T-cell (primary cell): ENCODE measurements at regions of chr19 and their contacts with region 1.

Region 1: GRCh38 chr19:51359294-51359693 is 6.9 kb downstream of the ETFB start:
- DNase-seq: no peak
- ATAC-seq: no peak
- H3K4me3 ChIP-seq: no peak overlapping the region
- H3K4me3 Mint-ChIP-seq: no peak overlapping the region
- H3K27ac ChIP-seq: no peak overlapping the region
- H3K27ac Mint-ChIP-seq: no peak overlapping the region
- H3K4me1 ChIP-seq: peaks cover 10 to 26% of the 10 kb centered on the region in 2 experiments
- H3K4me1 Mint-ChIP-seq: peaks cover 43 to 47% (median 45%) of the 10 kb centered on the region in 3 donors
- H3K27me3 ChIP-seq: no peaks in the 10 kb centered on the region
- H3K27me3 Mint-ChIP-seq: no peaks in the 10 kb centered on the region

Region 2: DNA sequence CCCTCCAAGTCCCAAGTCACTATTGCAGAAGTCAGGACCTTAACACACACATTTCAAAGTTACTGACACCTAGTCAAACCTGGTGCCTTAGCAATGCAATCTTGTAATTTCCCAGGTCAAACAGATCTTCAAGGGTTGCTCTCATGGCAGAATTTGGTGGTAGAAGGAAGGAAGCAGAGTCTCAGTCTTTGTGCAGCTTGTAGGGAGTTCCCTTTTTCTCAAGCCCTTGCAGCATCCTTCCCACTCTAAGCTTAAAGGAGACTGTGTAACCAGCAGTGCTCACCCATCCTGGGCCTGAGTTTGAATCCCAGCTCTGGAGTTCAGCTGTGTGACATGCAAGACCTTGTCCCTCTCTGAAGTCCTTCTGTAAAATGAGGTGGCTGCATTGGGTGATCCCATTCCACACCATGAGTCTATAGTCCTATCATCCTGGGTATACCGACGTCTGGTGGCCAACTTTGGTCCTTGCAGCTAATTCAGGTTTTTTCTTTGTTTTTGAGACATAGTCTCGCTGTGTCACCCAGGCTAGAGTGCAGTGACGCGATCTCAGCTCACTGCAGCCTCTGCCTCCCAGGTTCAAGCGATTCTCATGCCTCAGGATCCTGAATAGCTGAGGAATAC is 48.3 kb after region 1 on chr19:
- CTCF ChIA-PET with region 1: no interaction called
- POLR2A ChIA-PET with region 1: interaction called in 1 of 2 experiments, 10 read pairs
- DNase-seq: peak in 14 of 35 experiments; percentile 8 to 59 (median 20)
- ATAC-seq: peak; percentile 37 to 51 (median 50)
- H3K4me3 ChIP-seq: no peak overlapping the region
- H3K4me3 Mint-ChIP-seq: no peak overlapping the region
- H3K27ac ChIP-seq: no peak overlapping the region
- H3K27ac Mint-ChIP-seq: no peak overlapping the region
- H3K4me1 ChIP-seq: no peaks in the 10 kb centered on the region
- H3K4me1 Mint-ChIP-seq: peaks cover 0 to 4% (median 0%) of the 10 kb centered on the region in 3 donors
- H3K27me3 ChIP-seq: peaks cover 0 to 3% of the 10 kb centered on the region in 2 experiments
- H3K27me3 Mint-ChIP-seq: peaks cover 3 to 13% of the 10 kb centered on the region in 2 donors